CD14-positive monocyte (primary cell): ENCODE measurements at regions of chr21 and their contacts with region 1.

Region 1: GRCh38 chr21:43728467-43729390 is 9.8 kb downstream of the PDXK start:
- DNase-seq: peak; percentile 84 to 97 (median 89)
- H3K4me3 ChIP-seq: peak overlapping the region; percentile 16 to 76 (median 47)
- H3K4me3 Mint-ChIP-seq: peak overlapping the region; percentile 82 to 93
- H3K27ac ChIP-seq: peak overlapping the region; percentile 68 to 89
- H3K27ac Mint-ChIP-seq: peak overlapping the region; percentile 94 to 98 (median 97)
- H3K4me1 ChIP-seq: peaks cover 69 to 82% of the 10 kb centered on the region in 2 donors
- H3K4me1 Mint-ChIP-seq: peaks cover 80% of the 10 kb centered on the region
- H3K27me3 ChIP-seq: no peaks in the 10 kb centered on the region
- H3K27me3 Mint-ChIP-seq: peaks cover 0 to 6% (median 0%) of the 10 kb centered on the region in 3 donors
- CTCF ChIP-seq: no peak

Region 2: GRCh38 chr21:43676391-43676790 is 52.3 kb before region 1 on chr21:
- intact Hi-C with region 1: loop called in 1 of 2 experiments (anchors 10 kb)
- DNase-seq: no peak
- H3K4me3 ChIP-seq: no peak overlapping the region
- H3K4me3 Mint-ChIP-seq: no peak overlapping the region
- H3K27ac ChIP-seq: no peak overlapping the region
- H3K27ac Mint-ChIP-seq: peak overlapping the region in 1 of 7 donors; percentile 58
- H3K4me1 ChIP-seq: no peaks in the 10 kb centered on the region
- H3K4me1 Mint-ChIP-seq: no peaks in the 10 kb centered on the region
- H3K27me3 ChIP-seq: no peaks in the 10 kb centered on the region
- H3K27me3 Mint-ChIP-seq: no peaks in the 10 kb centered on the region
- CTCF ChIP-seq: no peak

Region 3: DNA sequence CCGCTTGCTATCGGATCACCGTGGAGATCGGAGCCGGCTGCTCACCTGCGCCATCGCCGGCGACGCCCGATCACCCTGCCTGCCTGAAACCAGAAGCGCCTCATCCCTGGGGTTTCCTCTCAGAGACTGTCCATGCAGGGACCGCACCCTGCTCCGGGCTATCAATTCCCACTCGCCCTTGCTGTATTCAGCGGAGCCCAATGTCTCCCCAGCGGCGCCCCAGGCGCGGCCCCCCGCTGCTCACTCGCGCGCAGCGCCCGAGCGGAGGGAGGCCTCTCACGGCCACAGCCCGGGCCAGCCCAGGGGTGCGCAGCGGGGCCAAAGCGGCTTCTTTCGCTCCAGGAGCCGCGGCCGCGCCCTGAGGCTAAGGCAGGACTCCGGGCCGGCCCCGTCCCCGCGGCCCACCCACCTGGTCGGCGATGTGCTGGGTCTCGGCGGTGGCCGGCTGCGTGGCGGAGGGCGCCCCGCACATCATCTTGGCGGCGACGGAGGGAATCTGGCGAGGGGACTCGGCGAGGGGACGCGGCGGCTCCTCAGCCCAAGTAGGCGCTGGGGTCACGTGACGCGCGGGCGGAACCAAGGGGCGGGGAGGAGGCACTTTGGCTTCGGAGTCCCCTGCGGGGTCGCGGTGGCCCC is 47.2 kb after region 1 on chr21 and contains the start of gene CSTB:
- intact Hi-C with region 1: loop called in 1 of 2 experiments (anchors 5 kb)
- DNase-seq: peak; percentile 64 to 75 (median 71)
- H3K4me3 ChIP-seq: peak within 1 kb of the TSS; percentile 57 to 97 (median 95)
- H3K4me3 Mint-ChIP-seq: peak within 1 kb of the TSS; percentile 95 to 98
- H3K27ac ChIP-seq: peak within 1 kb of the TSS; percentile 47 to 88
- H3K27ac Mint-ChIP-seq: peak within 1 kb of the TSS; percentile 80 to 90 (median 88)
- H3K4me1 ChIP-seq: peaks cover 34 to 57% of the 10 kb centered on the region in 2 donors
- H3K4me1 Mint-ChIP-seq: peaks cover 46% of the 10 kb centered on the region
- H3K27me3 ChIP-seq: no peaks in the 10 kb centered on the region
- H3K27me3 Mint-ChIP-seq: peaks cover 0 to 3% (median 0%) of the 10 kb centered on the region in 3 donors
- CTCF ChIP-seq: no peak
- polyA plus RNA-seq, gene CSTB: 73.7 to 120 (median 115) TPM

Region 4: DNA sequence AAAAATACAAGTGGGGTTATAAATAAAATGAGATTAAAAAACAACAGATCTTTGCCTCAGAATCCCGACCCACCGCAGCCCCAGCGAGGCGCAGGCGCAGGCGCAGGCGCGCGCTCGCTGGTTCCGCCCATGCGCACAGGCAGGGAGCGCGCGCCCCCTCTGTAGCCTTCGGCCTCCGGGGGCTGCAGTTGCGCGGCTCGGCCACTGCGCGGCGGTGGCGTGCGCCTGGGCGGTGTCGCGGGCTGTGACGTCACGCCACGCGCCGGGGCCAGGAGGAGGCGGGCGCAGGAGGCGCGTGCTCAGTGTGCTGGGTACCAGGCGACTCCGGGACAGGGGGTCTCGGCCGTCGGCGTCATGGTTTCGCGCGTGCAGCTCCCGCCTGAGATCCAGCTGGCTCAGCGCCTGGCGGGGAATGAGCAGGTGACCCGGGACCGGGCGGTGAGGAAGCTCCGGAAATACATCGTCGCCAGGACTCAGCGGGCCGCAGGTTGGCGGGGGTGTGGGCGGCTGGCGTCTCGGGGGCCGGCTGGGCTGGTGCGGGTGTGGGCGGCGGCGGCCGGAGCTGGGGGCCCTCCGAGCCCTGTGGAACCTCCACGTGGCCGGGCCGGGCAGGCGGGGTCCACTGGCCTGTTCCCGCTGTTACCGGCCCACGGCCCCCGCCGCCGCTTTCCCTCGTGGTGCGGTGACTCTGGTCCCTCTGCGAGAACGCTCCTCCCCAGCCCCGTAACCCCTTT is 60.7 kb after region 1 on chr21 and contains the start of gene RRP1:
- intact Hi-C with region 1: loop called in 1 of 2 experiments (anchors 5 kb)
- DNase-seq: peak; percentile 83 to 90 (median 86)
- H3K4me3 ChIP-seq: peak within 1 kb of the TSS; percentile 66 to 80 (median 66)
- H3K4me3 Mint-ChIP-seq: peak within 1 kb of the TSS; percentile 86 to 91
- H3K27ac ChIP-seq: peak within 1 kb of the TSS; percentile 71 to 82
- H3K27ac Mint-ChIP-seq: peak within 1 kb of the TSS; percentile 81 to 95 (median 89)
- H3K4me1 ChIP-seq: peaks cover 19 to 21% of the 10 kb centered on the region in 2 donors
- H3K4me1 Mint-ChIP-seq: peaks cover 18% of the 10 kb centered on the region
- H3K27me3 ChIP-seq: no peaks in the 10 kb centered on the region
- H3K27me3 Mint-ChIP-seq: peaks cover 0 to 4% (median 2%) of the 10 kb centered on the region in 3 donors
- CTCF ChIP-seq: peak; percentile 99
- polyA plus RNA-seq, gene RRP1: 2.7 to 5.7 (median 4.6) TPM